ENCODE measurements at regions of chr3 and their contacts with region 1.

Region 1: GRCh38 chr3:43503067-43503728 is 118.6 kb downstream of the ANO10 start:
- DNase-seq: no peak
- ATAC-seq: peak; percentile 20
- H3K4me3 Mint-ChIP-seq: no peak overlapping the region
- H3K27ac Mint-ChIP-seq: peak overlapping the region; percentile 30
- H3K4me1 Mint-ChIP-seq: peaks cover 62% of the 10 kb centered on the region
- H3K27me3 Mint-ChIP-seq: peaks cover 15% of the 10 kb centered on the region

Region 2: DNA sequence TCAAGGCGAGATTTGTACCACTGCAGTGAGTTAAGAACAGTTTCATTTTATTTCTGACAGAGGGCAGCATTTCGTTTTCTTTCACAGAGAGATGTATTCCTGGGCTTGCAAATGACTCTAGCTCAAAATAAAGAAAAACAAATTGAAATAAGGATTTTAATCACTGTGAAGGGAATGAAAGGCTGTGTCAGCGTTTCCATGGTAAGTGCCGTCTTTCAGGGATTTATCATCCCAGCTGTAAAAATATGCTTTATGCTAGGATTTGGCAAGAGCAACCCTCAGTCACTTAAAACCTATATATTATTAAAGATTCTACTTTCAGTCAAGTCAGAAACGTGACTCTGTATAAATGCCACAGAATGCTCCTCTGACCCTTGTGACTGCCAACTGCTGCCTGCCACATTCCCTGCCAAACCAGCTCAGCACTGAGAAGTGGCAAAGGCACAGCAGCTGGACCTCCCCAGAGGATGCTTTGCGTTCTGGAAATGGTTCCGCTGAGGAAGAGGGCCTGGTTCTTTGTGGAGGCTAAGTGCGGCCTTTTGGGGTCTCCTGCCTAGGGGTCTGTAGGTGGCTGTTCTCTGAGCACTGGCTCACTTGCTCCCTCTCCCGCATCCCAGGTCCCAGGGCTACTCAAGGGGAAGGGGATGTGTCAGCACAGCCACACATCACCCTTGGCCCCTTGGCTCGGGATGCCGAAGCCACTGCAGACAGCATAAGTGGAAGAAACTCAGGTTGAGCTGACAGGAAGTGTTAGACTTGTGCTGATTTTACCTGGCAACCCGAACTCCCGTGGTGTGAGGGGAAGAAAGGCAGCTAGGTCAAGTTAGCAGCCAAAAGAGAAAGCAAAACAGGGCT is 340.7 kb before region 1 on chr3:
- CTCF ChIA-PET with region 1: interaction called, 9 read pairs
- POLR2A ChIA-PET with region 1: no interaction called
- intact Hi-C with region 1: loop called (anchors 1 kb)
- DNase-seq: peak; percentile 57
- ATAC-seq: peak; percentile 84
- H3K4me3 Mint-ChIP-seq: peak overlapping the region; percentile 61
- H3K27ac Mint-ChIP-seq: peak overlapping the region; percentile 87
- H3K4me1 Mint-ChIP-seq: peaks cover 20% of the 10 kb centered on the region
- H3K27me3 Mint-ChIP-seq: no peaks in the 10 kb centered on the region

Region 3: GRCh38 chr3:43243590-43244587 is 259.3 kb before region 1 on chr3:
- CTCF ChIA-PET with region 1: interaction called, 5 read pairs
- POLR2A ChIA-PET with region 1: no interaction called
- intact Hi-C with region 1: loop called in 1 of 2 experiments (anchors 5 kb)
- DNase-seq: peak; percentile 17
- ATAC-seq: peak; percentile 39
- H3K4me3 Mint-ChIP-seq: no peak overlapping the region
- H3K27ac Mint-ChIP-seq: no peak overlapping the region
- H3K4me1 Mint-ChIP-seq: peaks cover 53% of the 10 kb centered on the region
- H3K27me3 Mint-ChIP-seq: no peaks in the 10 kb centered on the region

Region 4: GRCh38 chr3:43515208-43515917 is 12.2 kb after region 1 on chr3:
- CTCF ChIA-PET with region 1: interaction called, 4 read pairs
- POLR2A ChIA-PET with region 1: no interaction called
- intact Hi-C with region 1: loop called in 1 of 2 experiments (anchors 1 kb)
- DNase-seq: no peak
- ATAC-seq: peak; percentile 75
- H3K4me3 Mint-ChIP-seq: no peak overlapping the region
- H3K27ac Mint-ChIP-seq: no peak overlapping the region
- H3K4me1 Mint-ChIP-seq: peaks cover 12% of the 10 kb centered on the region
- H3K27me3 Mint-ChIP-seq: no peaks in the 10 kb centered on the region